ENCODE measurements at regions of chr11 and their contacts with region 1.

Region 1: GRCh38 chr11:28100665-28101064 is 7.3 kb downstream of the KIF18A start:
- DNase-seq: no peak
- H3K4me3 ChIP-seq: no peak overlapping the region
- H3K27ac ChIP-seq: no peak overlapping the region
- H3K4me1 ChIP-seq: peaks cover 16% of the 10 kb centered on the region
- H3K27me3 ChIP-seq: no peaks in the 10 kb centered on the region
- CTCF ChIP-seq: no peak

Region 2: DNA sequence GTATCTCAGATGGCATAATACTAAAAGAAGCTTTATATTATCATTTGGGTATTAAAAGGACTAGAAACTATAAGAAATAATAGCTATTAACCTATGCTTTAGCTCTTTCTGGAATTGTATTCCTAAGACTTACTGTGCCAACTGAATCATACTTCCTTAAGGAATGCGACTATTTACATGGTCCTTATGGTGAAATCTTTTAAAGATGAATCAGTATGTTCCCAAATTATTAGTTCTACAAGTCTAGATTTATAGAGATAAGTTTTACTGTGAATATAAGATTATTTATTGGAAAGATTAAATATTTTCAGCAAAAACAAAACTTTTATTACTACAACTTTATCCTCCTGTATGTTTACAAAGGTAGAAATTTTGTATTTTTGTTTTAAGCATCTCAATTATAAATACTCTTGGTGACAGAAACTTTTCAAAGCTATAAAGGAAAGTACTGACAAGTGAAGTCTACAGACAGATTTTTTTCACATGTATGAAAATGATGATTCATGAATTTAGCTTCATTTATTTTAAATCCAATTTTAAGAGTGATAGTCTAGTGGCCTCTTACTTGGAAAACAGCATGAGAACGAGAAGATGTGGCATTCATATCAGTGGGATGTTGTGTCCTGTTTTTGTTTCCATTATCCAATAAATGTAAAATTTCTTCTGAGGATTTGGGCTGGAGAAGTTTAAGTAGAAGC is 10.5 kb before region 1 on chr11:
- CTCF ChIA-PET with region 1: no interaction called
- POLR2A ChIA-PET with region 1: interaction called, 13 read pairs
- intact Hi-C with region 1: no loop called
- DNase-seq: no peak
- H3K4me3 ChIP-seq: no peak overlapping the region
- H3K27ac ChIP-seq: no peak overlapping the region
- H3K4me1 ChIP-seq: no peaks in the 10 kb centered on the region
- H3K27me3 ChIP-seq: no peaks in the 10 kb centered on the region
- CTCF ChIP-seq: no peak

Measured in PC-9 (cell line).